ENCODE measurements at regions of chr15 and their contacts with region 1.

Region 1: GRCh38 chr15:84876269-84876668 is 8.2 kb upstream of the SLC28A1 start:
- DNase-seq: no peak
- ATAC-seq: no peak
- H3K4me3 ChIP-seq: no peak overlapping the region
- H3K4me3 Mint-ChIP-seq: no peak overlapping the region
- H3K27ac ChIP-seq: no peak overlapping the region
- H3K27ac Mint-ChIP-seq: no peak overlapping the region
- H3K4me1 ChIP-seq: no peaks in the 10 kb centered on the region
- H3K4me1 Mint-ChIP-seq: no peaks in the 10 kb centered on the region
- H3K27me3 ChIP-seq: no peaks in the 10 kb centered on the region
- H3K27me3 Mint-ChIP-seq: no peaks in the 10 kb centered on the region
- CTCF ChIP-seq: no peak

Region 2: DNA sequence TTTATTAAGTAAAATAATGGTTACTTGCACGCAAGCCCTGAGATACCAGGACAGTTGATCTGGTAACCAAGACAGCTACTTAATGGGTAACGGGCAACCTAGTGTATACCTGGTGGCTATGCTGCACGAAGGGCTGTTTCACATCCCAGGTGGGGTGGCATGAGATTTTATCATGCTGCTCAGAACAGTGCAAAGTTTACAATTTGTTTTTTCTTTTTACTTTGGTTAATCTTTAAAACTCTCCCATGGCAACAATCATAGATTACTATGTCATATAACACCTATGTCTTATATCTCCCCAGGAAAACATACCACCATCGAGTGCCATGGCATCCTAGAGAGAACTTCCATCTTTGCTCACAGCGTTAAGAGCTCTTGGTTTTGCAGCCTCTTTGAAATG is 24.1 kb before region 1 on chr15:
- CTCF ChIA-PET with region 1: no interaction called
- POLR2A ChIA-PET with region 1: no interaction called
- intact Hi-C with region 1: loop called in 1 of 2 experiments (anchors 1 kb)
- DNase-seq: no peak
- ATAC-seq: no peak
- H3K4me3 ChIP-seq: no peak overlapping the region
- H3K4me3 Mint-ChIP-seq: no peak overlapping the region
- H3K27ac ChIP-seq: no peak overlapping the region
- H3K27ac Mint-ChIP-seq: no peak overlapping the region
- H3K4me1 ChIP-seq: no peaks in the 10 kb centered on the region
- H3K4me1 Mint-ChIP-seq: no peaks in the 10 kb centered on the region
- H3K27me3 ChIP-seq: no peaks in the 10 kb centered on the region
- H3K27me3 Mint-ChIP-seq: no peaks in the 10 kb centered on the region
- CTCF ChIP-seq: no peak

Region 3: DNA sequence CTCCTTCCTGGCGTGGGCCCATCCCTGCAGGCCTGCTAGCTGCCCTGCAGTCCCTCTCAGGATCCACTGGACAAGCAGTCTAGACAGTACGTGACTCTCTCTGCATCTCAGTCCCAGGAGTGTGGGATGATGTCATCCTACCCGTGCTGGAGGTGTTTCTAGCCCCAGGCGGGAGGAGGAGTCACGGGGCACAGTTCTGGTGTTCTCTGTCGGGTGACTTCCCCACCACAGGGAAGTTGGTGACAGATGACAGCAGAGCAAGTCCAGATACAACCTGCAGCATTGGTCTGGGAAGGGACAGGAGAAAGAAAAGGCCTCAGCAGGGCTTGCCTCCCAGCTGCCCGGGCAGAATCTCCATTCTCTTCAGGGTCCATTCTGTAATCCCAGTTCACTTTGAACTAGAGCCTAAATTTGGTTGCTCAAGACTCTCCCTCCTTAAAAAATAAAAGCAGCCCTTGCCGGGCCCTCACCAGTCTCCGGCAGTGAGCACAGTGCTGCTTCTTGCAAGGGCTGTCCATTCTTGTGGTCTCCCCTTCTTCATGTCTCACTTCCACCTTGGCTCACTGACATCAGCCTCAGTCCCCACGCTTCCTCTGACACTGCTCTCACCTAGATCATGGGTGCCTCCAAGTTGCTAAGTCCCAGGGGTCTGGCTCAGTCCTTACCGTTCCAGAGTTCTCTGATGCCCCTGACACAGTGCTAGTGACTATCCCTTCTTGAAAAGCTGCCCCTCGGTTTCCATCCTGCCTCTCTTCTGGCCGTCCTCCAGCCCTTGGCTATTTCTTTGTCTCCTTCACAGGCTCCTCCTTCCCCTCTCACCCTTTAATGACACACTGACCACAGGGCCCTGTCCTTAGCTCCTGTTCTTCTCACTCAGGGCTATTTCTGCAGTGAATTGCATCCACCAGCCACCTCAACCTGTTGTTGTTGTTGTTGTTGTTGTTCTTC is 39.0 kb after region 1 on chr15:
- CTCF ChIA-PET with region 1: no interaction called
- POLR2A ChIA-PET with region 1: no interaction called
- intact Hi-C with region 1: no loop called
- DNase-seq: peak in 5 of 9 experiments; percentile 13 to 50 (median 22)
- ATAC-seq: peak; percentile 79
- H3K4me3 ChIP-seq: no peak overlapping the region
- H3K4me3 Mint-ChIP-seq: no peak overlapping the region
- H3K27ac ChIP-seq: no peak overlapping the region
- H3K27ac Mint-ChIP-seq: peak overlapping the region; percentile 65
- H3K4me1 ChIP-seq: no peaks in the 10 kb centered on the region
- H3K4me1 Mint-ChIP-seq: peaks cover 5% of the 10 kb centered on the region
- H3K27me3 ChIP-seq: no peaks in the 10 kb centered on the region
- H3K27me3 Mint-ChIP-seq: peaks cover 8% of the 10 kb centered on the region
- CTCF ChIP-seq: no peak